Activated CD4-positive, alpha-beta T cell treated with anti-CD3 and anti-CD28 coated beads, Interleukin-2, amount 10 ng/mL, durations not matched to agents 24 days and 14 days (primary cell): ENCODE measurements at regions of chr18 and their contacts with region 1.

Region 1: DNA sequence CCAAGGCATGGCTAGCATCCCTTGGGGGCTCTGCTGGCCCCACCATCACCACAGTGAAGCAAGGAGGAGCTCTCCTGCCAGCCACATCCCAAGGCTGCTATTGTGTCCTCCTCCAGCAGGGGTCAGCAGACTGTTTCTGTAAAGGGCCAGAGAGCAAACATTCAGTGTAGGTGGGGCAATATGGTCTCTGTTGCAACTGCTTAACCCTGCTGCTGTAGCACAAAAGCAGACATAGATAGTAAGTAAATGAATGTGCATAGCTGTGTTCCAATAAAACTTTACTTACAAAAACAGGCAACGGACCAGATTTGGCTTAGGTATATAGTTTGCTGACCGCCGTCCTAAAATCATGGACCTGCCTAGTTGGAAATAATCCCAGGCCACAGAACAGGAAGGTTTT is 36.4 kb upstream of the ZBTB7C start:
- DNase-seq: peak; percentile 92
- H3K4me3 Mint-ChIP-seq: no peak overlapping the region
- H3K27ac Mint-ChIP-seq: no peak overlapping the region
- H3K4me1 Mint-ChIP-seq: peaks cover 4% of the 10 kb centered on the region
- H3K27me3 Mint-ChIP-seq: peaks cover 51% of the 10 kb centered on the region

Region 2: GRCh38 chr18:48022531-48023329 is 422.8 kb before region 1 on chr18:
- intact Hi-C with region 1: loop called (anchors 1 kb)
- DNase-seq: peak; percentile 78
- H3K4me3 Mint-ChIP-seq: no peak overlapping the region
- H3K27ac Mint-ChIP-seq: no peak overlapping the region
- H3K4me1 Mint-ChIP-seq: peaks cover 7% of the 10 kb centered on the region
- H3K27me3 Mint-ChIP-seq: peaks cover 19% of the 10 kb centered on the region

Region 3: GRCh38 chr18:48030616-48031480 is 414.7 kb before region 1 on chr18:
- intact Hi-C with region 1: loop called (anchors 2 kb)
- DNase-seq: peak; percentile 68
- H3K4me3 Mint-ChIP-seq: no peak overlapping the region
- H3K27ac Mint-ChIP-seq: no peak overlapping the region
- H3K4me1 Mint-ChIP-seq: no peaks in the 10 kb centered on the region
- H3K27me3 Mint-ChIP-seq: peaks cover 3% of the 10 kb centered on the region

Region 4: DNA sequence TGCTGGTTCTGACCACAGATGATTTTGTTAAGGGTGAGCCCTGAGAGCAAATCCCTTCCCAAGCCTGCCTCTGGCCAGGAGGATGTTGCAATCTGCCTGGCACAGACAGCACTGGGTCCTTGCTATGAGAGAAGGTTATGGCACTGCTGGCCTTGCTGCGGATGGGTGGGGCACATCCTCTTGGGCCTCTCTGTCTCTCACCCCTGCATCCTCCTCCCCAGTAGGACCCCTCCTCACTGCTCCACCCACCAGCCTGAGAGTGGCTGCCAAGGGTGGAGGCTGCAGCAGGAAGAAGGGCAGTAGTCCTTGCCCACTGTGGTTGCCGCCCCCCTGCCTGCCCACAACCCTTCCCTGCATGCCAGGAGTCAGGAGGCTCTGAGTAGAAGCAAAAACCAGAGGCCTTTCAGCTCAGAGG is 217.2 kb before region 1 on chr18:
- intact Hi-C with region 1: loop called (anchors 5 kb)
- DNase-seq: peak; percentile 64
- H3K4me3 Mint-ChIP-seq: no peak overlapping the region
- H3K27ac Mint-ChIP-seq: peak overlapping the region; percentile 35
- H3K4me1 Mint-ChIP-seq: peaks cover 29% of the 10 kb centered on the region
- H3K27me3 Mint-ChIP-seq: peaks cover 9% of the 10 kb centered on the region

Region 5: GRCh38 chr18:48455555-48456478 is 10.3 kb after region 1 on chr18:
- intact Hi-C with region 1: no loop called
- DNase-seq: peak; percentile 75
- H3K4me3 Mint-ChIP-seq: no peak overlapping the region
- H3K27ac Mint-ChIP-seq: peak overlapping the region; percentile 75
- H3K4me1 Mint-ChIP-seq: peaks cover 6% of the 10 kb centered on the region
- H3K27me3 Mint-ChIP-seq: peaks cover 53% of the 10 kb centered on the region

Region 6: DNA sequence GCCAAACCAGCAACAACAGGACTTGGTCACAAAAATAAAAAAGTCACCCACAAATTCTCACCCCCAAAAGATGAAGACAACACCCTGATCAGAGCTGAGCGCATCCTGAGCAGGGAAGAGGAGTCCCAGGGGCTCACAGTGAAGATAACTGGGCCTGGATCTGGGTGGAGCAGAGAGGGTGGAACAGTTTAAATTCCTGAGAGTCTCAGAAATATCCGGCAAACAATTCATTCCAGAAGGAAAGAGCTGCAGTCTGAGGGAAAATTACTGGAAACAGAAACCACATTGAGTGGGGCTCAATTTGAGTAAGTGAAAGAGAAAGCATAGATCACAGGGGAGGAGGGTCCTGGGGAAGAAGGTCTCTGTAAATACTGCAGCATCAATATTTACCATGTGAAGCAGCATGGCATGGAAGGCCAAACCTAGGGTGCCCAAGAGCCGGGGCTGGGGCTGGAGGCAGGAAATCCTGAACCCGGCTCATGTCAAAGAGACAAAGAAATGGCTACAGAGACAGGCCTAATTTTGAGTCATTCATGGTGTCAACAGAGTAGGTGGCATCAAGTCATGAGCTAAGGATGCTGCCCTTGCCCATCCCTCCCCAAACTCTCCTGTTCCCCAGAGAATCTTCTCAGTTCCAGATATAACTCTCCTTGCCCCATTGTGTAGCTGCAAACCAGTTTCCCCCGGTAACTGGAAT is 25.1 kb after region 1 on chr18:
- intact Hi-C with region 1: loop called (anchors 1 kb)
- DNase-seq: no peak
- H3K4me3 Mint-ChIP-seq: no peak overlapping the region
- H3K27ac Mint-ChIP-seq: no peak overlapping the region
- H3K4me1 Mint-ChIP-seq: peaks cover 3% of the 10 kb centered on the region
- H3K27me3 Mint-ChIP-seq: peaks cover 27% of the 10 kb centered on the region

Region 7: GRCh38 chr18:48934723-48935432 is 489.3 kb after region 1 on chr18:
- intact Hi-C with region 1: no loop called
- DNase-seq: no peak
- H3K4me3 Mint-ChIP-seq: peak overlapping the region; percentile 74
- H3K27ac Mint-ChIP-seq: peak overlapping the region; percentile 88
- H3K4me1 Mint-ChIP-seq: peaks cover 82% of the 10 kb centered on the region
- H3K27me3 Mint-ChIP-seq: no peaks in the 10 kb centered on the region